Stomach (tissue), 19 donors: ENCODE measurements at regions of chr1 and their contacts with region 1.

Region 1: GRCh38 chr1:234326497-234327366 is 46.5 kb upstream of the COA6 start:
- DNase-seq: peak; percentile 60 to 79
- H3K4me3 ChIP-seq: peak overlapping the region in 3 of 4 donors; percentile 16 to 32 (median 18)
- H3K27ac ChIP-seq: no peak overlapping the region
- H3K4me1 ChIP-seq: peaks cover 0 to 13% (median 4%) of the 10 kb centered on the region in 4 donors
- H3K27me3 ChIP-seq: peaks cover 0 to 37% (median 12%) of the 10 kb centered on the region in 3 donors
- CTCF ChIP-seq: peak in 4 of 7 experiments; percentile 44 to 69 (median 60)
- EP300 ChIP-seq: no peak
- POLR2A ChIP-seq: no peak

Region 2: DNA sequence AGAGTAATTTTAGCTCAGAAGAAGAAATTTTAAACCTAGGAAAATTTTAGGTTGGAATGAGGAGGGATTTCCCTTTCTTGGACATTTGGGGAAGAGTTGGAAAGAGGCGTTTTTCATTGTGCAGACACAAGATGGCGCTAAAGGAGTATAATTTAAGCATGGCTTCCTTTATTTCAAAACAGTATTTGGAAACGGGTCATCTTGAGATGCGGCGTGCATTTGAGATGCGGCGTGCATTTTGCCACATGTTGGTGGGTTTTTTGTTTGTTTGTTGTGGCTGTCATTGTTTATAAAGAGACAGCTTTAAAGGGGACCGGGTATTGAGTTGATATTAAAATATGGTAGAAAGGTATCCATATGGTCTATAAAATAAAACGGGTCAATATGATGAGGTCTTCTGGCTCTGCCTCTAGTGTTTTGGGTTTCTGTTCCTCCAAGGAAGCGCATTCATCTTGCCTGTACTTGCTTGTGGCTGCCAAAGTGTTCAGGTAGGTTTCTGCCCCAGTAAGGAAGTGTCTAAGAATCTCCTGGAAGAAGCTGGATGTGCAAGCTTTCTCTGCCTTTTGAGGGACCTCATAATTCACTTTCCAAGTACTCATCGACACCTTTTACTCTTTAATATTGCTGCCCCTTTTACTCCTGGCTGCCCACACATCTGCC is 212.0 kb before region 1 on chr1:
- intact Hi-C with region 1: loop called (anchors 10 kb)
- DNase-seq: peak in 1 of 2 donors; percentile 78
- H3K4me3 ChIP-seq: no peak overlapping the region
- H3K27ac ChIP-seq: no peak overlapping the region
- H3K4me1 ChIP-seq: peaks cover 0 to 3% (median 0%) of the 10 kb centered on the region in 4 donors
- H3K27me3 ChIP-seq: peaks cover 0 to 21% (median 0%) of the 10 kb centered on the region in 3 donors
- CTCF ChIP-seq: peak in 4 of 7 experiments; percentile 29 to 53 (median 42)
- EP300 ChIP-seq: no peak
- POLR2A ChIP-seq: no peak